Colonic mucosa (tissue), 4 donors: ENCODE measurements at regions of chr13 and their contacts with region 1.

Region 1: GRCh38 chr13:71880753-71881541 is 13.9 kb upstream of the DACH1 start:
- DNase-seq: no peak
- H3K4me3 ChIP-seq: no peak overlapping the region
- H3K27ac ChIP-seq: no peak overlapping the region
- H3K4me1 ChIP-seq: no peaks in the 10 kb centered on the region
- H3K27me3 ChIP-seq: no peaks in the 10 kb centered on the region
- CTCF ChIP-seq: no peak

Region 2: GRCh38 chr13:70960841-70961443 is 920.0 kb before region 1 on chr13:
- intact Hi-C with region 1: loop called (anchors 10 kb)
- DNase-seq: no peak
- H3K4me3 ChIP-seq: no peak overlapping the region
- H3K27ac ChIP-seq: no peak overlapping the region
- H3K4me1 ChIP-seq: no peaks in the 10 kb centered on the region
- H3K27me3 ChIP-seq: no peaks in the 10 kb centered on the region
- CTCF ChIP-seq: peak; percentile 37

Region 3: DNA sequence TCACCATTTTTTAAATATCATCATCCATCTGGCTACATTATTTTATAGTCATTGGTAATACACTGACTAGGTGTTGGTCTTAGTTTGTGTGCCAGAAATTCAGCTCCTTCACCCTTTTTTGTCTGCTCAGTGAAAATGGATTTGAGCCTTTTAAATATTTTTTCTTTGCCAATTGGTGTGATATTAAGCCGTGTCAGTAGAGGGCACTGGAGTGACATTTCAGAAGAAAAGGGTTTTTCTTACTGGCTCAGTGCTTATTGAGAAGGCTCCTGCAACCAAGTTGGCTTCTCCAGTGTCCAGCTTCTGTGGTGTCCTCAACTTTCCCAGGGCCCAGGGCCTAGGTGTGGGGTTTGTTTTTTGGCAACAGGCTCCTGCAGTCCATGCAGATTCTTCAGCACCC is 560.5 kb before region 1 on chr13:
- intact Hi-C with region 1: loop called (anchors 5 kb)
- DNase-seq: peak; percentile 20
- H3K4me3 ChIP-seq: no peak overlapping the region
- H3K27ac ChIP-seq: no peak overlapping the region
- H3K4me1 ChIP-seq: no peaks in the 10 kb centered on the region
- H3K27me3 ChIP-seq: no peaks in the 10 kb centered on the region
- CTCF ChIP-seq: peak; percentile 45